Tibial artery (tissue), 4 donors: ENCODE measurements at regions of chr19 and their contacts with region 1.

Region 1: GRCh38 chr19:15555759-15556633 is 47.7 kb downstream of the CYP4F22 start:
- DNase-seq: peak; percentile 91 to 93
- H3K4me3 ChIP-seq: peak overlapping the region; percentile 16 to 27
- H3K27ac ChIP-seq: peak overlapping the region in 1 of 2 donors; percentile 45
- H3K4me1 ChIP-seq: peaks cover 0 to 23% (median 13%) of the 10 kb centered on the region in 4 donors
- H3K27me3 ChIP-seq: peaks cover 0 to 22% of the 10 kb centered on the region in 2 donors
- CTCF ChIP-seq: peak; percentile 79 to 86

Region 2: GRCh38 chr19:15091901-15092753 is 463.9 kb before region 1 on chr19:
- intact Hi-C with region 1: loop called (anchors 5 kb)
- DNase-seq: no peak
- H3K4me3 ChIP-seq: no peak overlapping the region
- H3K27ac ChIP-seq: no peak overlapping the region
- H3K4me1 ChIP-seq: peaks cover 0 to 4% (median 0%) of the 10 kb centered on the region in 4 donors
- H3K27me3 ChIP-seq: peaks cover 0 to 8% of the 10 kb centered on the region in 2 donors
- CTCF ChIP-seq: peak; percentile 47 to 61

Region 3: GRCh38 chr19:15177269-15178116 is 378.5 kb before region 1 on chr19:
- intact Hi-C with region 1: loop called (anchors 10 kb)
- DNase-seq: peak; percentile 73 to 89
- H3K4me3 ChIP-seq: peak overlapping the region; percentile 12 to 30
- H3K27ac ChIP-seq: peak overlapping the region; percentile 73 to 78
- H3K4me1 ChIP-seq: peaks cover 0 to 48% (median 20%) of the 10 kb centered on the region in 4 donors
- H3K27me3 ChIP-seq: no peaks in the 10 kb centered on the region
- CTCF ChIP-seq: peak; percentile 97 to 100

Region 4: GRCh38 chr19:15264061-15264932 is 291.7 kb before region 1 on chr19:
- intact Hi-C with region 1: loop called (anchors 5 kb)
- DNase-seq: peak; percentile 78 to 87
- H3K4me3 ChIP-seq: no peak overlapping the region
- H3K27ac ChIP-seq: peak overlapping the region; percentile 67 to 79
- H3K4me1 ChIP-seq: peaks cover 13 to 64% (median 57%) of the 10 kb centered on the region in 4 donors
- H3K27me3 ChIP-seq: no peaks in the 10 kb centered on the region
- CTCF ChIP-seq: peak; percentile 78 to 87

Region 5: DNA sequence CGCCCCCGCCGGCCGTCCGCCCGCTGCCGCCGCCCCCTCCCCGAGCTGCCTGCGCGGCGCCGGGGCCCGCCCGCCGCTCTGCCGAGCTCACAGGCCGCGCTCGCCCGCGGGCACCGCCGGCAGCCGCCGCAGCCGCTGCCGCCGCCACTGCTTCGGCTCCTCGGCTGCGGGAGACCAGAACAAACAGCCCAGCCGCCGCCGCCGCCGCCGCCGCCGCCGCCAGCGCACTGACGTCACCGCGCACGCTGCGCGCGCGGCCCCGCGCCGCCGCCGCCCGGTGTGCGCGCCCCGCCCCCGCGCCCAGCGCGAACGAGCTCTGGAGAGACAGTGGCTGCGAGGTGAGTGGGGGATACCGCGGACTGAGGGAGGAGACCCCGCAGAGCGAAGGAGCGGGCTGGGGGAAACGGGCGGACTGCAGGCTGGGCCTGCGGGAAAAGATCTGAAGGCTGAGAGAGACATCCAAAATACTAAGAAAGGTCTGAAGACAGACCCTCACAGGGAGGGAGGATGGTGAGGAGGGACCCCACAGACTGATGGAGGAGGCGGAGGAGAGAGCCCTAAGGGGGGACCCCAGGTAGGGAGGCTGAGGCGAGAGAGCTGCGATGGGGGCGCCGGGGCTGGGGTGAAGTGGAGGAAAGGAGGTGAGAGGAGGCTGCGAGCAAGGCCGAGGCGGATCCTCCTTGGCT is 223.5 kb before region 1 on chr19 and contains the start of gene BRD4:
- intact Hi-C with region 1: loop called (anchors 10 kb)
- DNase-seq: peak; percentile 58 to 82
- H3K4me3 ChIP-seq: peak within 1 kb of the TSS; percentile 86 to 97
- H3K27ac ChIP-seq: peak within 1 kb of the TSS; percentile 96
- H3K4me1 ChIP-seq: peaks cover 0 to 79% (median 51%) of the 10 kb centered on the region in 4 donors
- H3K27me3 ChIP-seq: no peaks in the 10 kb centered on the region
- CTCF ChIP-seq: no peak

Region 6: GRCh38 chr19:15404097-15404779 is 151.8 kb before region 1 on chr19:
- intact Hi-C with region 1: loop called (anchors 10 kb)
- DNase-seq: peak in 1 of 2 donors; percentile 67
- H3K4me3 ChIP-seq: no peak overlapping the region
- H3K27ac ChIP-seq: peak overlapping the region; percentile 69 to 71
- H3K4me1 ChIP-seq: peaks cover 7 to 73% (median 42%) of the 10 kb centered on the region in 4 donors
- H3K27me3 ChIP-seq: no peaks in the 10 kb centered on the region
- CTCF ChIP-seq: no peak

Region 7: DNA sequence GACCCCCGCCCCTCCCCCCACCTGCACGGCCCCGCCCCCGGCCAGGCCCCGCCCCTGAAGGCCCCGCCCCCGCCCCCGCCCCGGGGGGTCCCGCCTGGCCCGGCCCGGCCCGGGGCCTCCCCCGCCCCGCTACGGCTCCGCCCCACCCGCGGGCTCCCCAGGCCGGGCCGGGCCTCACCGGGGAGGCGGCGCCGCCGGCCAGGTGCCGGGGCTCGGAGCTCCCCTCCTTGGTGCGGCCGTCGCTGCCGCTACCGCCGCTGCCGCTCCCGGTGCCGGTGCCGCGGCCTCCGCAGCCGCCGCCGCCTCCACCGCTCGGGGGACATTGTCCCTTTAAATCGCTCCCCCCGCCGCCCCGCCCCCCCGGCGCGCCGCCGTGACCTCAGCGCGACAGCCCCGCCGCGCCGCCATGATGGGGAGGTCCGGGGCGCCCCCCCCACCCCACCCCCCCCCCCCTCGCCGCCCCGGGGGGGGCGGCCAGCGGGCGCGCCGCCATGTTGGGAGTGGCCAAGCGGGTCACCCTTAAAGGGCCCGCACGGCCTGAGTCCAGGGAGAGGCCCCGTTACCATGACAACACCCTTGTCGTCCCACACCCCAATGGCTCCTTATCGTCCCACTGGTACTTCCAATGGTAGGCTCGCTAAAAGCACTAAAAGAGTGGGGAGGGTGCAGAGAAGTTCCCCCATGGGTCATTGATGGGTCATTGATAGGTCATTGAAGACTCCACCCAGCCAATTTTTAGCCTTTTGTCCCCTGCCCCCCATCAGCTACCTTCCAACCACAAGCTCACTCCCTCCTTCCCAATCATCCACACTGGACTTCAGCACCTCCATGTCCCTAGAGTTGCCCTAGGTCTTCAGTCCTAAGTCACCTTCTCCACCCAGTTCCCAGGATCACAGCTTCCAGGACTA is 106.1 kb before region 1 on chr19 and contains the start of gene WIZ:
- intact Hi-C with region 1: loop called (anchors 5 kb)
- DNase-seq: peak; percentile 81 to 90
- H3K4me3 ChIP-seq: peak within 1 kb of the TSS; percentile 66 to 87
- H3K27ac ChIP-seq: peak within 1 kb of the TSS; percentile 75 to 82
- H3K4me1 ChIP-seq: peaks cover 0 to 53% (median 44%) of the 10 kb centered on the region in 4 donors
- H3K27me3 ChIP-seq: peaks cover 0 to 12% of the 10 kb centered on the region in 2 donors
- CTCF ChIP-seq: no peak

Region 8: DNA sequence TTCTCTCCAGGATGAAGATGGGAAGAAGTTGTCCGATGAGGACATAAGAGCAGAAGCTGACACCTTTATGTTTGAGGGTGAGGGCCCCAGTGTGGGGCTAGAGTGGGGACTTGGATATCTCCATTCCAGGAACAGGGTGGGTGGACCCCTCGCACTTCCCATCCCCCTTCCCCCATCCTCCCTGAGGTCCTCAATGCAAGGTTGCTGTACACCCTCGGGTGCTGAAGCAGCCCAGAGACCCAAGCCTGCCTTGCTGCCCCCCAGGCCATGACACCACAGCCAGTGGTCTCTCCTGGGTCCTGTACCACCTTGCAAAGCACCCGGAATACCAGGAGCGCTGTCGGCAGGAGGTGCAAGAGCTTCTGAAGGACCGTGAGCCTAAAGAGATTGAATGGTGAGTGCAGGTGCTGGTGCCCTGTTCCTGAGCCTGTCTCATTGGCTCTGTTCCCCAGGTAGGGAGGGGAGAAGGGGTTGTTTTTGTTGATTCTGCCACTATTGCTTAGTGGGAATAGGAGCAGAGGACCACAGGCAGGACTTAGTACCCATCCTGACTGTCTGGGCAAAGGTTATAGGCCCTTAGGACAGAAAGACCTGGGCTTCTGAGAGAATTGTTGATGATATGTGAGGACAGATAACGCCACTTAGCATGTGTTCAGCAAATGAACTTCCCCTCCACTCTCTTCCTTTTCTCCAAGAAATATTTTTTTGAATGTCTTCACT is 96.7 kb after region 1 on chr19:
- intact Hi-C with region 1: no loop called
- DNase-seq: no peak
- H3K4me3 ChIP-seq: no peak overlapping the region
- H3K27ac ChIP-seq: no peak overlapping the region
- H3K4me1 ChIP-seq: no peaks in the 10 kb centered on the region
- H3K27me3 ChIP-seq: peaks cover 0 to 16% of the 10 kb centered on the region in 2 donors
- CTCF ChIP-seq: no peak

Region 9: GRCh38 chr19:15748239-15748638 is 192.2 kb after region 1 on chr19:
- intact Hi-C with region 1: no loop called
- DNase-seq: no peak
- H3K4me3 ChIP-seq: no peak overlapping the region
- H3K27ac ChIP-seq: no peak overlapping the region
- H3K4me1 ChIP-seq: no peaks in the 10 kb centered on the region
- H3K27me3 ChIP-seq: peaks cover 0 to 11% of the 10 kb centered on the region in 2 donors
- CTCF ChIP-seq: no peak